ENCODE measurements at regions of chr2 and their contacts with region 1.

Region 1: DNA sequence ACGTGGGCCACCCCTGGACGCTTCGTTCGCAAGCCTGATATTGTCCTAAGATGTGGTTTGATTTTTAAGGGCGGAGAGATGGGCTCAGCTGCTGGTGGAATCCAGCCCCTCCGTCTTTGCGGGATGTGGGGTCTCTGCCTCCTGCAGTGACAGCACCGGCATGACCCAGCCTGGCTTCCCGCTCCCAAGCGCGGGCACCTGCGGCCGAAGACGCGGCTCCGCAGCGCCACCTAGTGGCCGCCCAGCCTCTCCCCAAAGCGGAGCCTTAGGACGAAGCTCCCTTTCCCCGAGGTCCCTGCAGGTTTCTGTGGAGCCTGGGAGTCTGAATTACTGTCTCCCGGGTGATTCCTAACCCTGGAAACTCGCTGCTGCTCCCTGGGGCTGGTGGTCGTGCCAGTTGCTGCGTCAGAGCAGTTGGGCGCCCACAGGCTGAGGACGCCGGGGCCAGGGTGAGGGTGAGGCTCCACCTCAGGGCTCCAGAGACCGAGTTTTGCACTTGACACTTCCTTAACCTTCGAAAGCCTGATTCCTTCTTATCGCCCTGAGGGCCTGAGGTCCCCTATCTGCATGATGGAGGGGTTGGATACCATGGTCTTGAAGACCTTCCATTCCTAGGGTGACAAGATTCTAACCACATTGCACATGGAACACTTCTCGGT is 137.5 kb downstream of the TPO start:
- ATAC-seq: peak; percentile 86 to 94 (median 89)
- H3K4me3 ChIP-seq: no peak overlapping the region
- H3K27ac ChIP-seq: no peak overlapping the region
- H3K4me1 ChIP-seq: peaks cover 9% of the 10 kb centered on the region in 2 donors

Region 2: GRCh38 chr2:677056-677965 is 873.5 kb before region 1 on chr2 and contains the start of gene TMEM18:
- in situ Hi-C with region 1: no loop called
- ATAC-seq: peak; percentile 52 to 77 (median 71)
- H3K4me3 ChIP-seq: peak within 1 kb of the TSS; percentile 67 to 88 (median 72)
- H3K27ac ChIP-seq: peak within 1 kb of the TSS; percentile 99
- H3K4me1 ChIP-seq: peaks cover 18 to 22% of the 10 kb centered on the region in 2 donors
- total RNA-seq, gene TMEM18: 10.5 to 16.0 (median 13.3) TPM

Region 3: GRCh38 chr2:714005-714741 is 836.6 kb before region 1 on chr2:
- in situ Hi-C with region 1: loop called in 2 of 9 experiments (anchors 25 kb)
- ATAC-seq: peak in 5 of 8 experiments; percentile 50 to 96 (median 77)
- H3K4me3 ChIP-seq: no peak overlapping the region
- H3K27ac ChIP-seq: no peak overlapping the region
- H3K4me1 ChIP-seq: peaks cover 0 to 4% of the 10 kb centered on the region in 2 donors

Region 4: GRCh38 chr2:950080-950966 is 600.5 kb before region 1 on chr2 and contains the start of gene SNTG2:
- in situ Hi-C with region 1: loop called in 1 of 9 experiments (anchors 25 kb)
- ATAC-seq: peak; percentile 70 to 91 (median 88)
- H3K4me3 ChIP-seq: peak within 1 kb of the TSS; percentile 37 to 79 (median 66)
- H3K27ac ChIP-seq: no peak within 1 kb of the TSS
- H3K4me1 ChIP-seq: no peaks in the 10 kb centered on the region
- total RNA-seq, gene SNTG2: 0.21 to 2.8 (median 1.1) TPM

Region 5: GRCh38 chr2:1140389-1141003 is 410.3 kb before region 1 on chr2:
- in situ Hi-C with region 1: loop called in 2 of 9 experiments (anchors 10 kb)
- ATAC-seq: peak in 4 of 8 experiments; percentile 35 to 86 (median 62)
- H3K4me3 ChIP-seq: no peak overlapping the region
- H3K27ac ChIP-seq: no peak overlapping the region
- H3K4me1 ChIP-seq: no peaks in the 10 kb centered on the region

Region 6: GRCh38 chr2:1707771-1708418 is 157.1 kb after region 1 on chr2:
- in situ Hi-C with region 1: no loop called
- ATAC-seq: peak in 7 of 8 experiments; percentile 45 to 74 (median 69)
- H3K4me3 ChIP-seq: no peak overlapping the region
- H3K27ac ChIP-seq: no peak overlapping the region
- H3K4me1 ChIP-seq: peaks cover 19 to 24% of the 10 kb centered on the region in 2 donors

Measured in motor neuron (in vitro differentiated cells).